ENCODE measurements at regions of chr2 and their contacts with region 1.

Region 1: DNA sequence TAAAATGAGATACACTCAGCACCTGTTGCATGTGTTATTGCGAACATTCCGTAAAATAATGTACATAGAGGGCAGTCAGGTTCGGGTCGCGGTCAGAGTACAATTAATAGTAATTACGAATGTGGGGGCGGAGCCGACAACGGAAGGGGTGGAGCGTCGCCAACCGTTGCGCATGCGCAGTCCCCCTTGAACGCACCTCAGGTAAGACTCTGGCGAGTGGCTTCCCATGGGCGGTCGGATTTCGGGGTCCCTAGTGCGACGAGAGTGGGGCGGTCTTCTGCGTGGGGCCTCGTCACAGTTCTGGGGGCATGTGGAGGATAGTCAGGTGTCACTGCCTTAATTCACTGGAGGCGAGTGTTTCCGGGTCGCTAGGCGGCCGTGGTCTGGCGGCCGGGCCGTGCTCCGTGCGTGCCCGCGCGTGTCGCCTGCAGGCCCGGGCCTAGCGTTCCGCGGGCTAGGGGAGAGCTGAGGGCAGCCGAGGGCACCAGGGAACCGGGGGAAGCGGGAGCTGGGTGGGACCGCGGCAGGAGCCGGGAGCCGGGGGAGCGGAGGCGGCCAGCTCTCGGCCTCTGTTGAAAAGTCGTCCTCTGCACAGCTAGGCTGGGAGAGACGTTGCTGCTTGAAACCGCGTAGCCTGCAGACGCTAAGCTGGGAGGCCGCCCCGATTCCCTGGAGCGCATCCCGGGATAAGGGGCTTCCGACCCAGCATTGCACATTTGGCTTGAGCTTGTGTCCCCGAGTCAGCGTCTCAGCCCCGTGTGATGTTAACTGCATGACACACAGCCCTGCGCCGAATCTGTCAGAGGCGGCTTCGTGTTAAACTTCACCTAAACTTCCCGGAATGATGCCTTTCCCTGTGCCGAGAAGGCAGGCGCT is at the start of gene CEBPZOS:
- DNase-seq: peak; percentile 65 to 85 (median 81)
- H3K4me3 ChIP-seq: peak within 1 kb of the TSS; percentile 65 to 98 (median 89)
- H3K27ac ChIP-seq: peak within 1 kb of the TSS in 58 of 59 donors; percentile 27 to 96 (median 84)
- H3K27me3 ChIP-seq: no peaks in the 10 kb centered on the region
- CTCF ChIP-seq: peak in 16 of 56 donors; percentile 7 to 34 (median 22)
- total RNA-seq, gene CEBPZOS: 31.6 to 64.9 (median 49.0) TPM

Region 2: GRCh38 chr2:37156857-37157714 is 39.5 kb before region 1 on chr2 and contains the start of gene EIF2AK2:
- intact Hi-C with region 1: loop called (anchors 5 kb)
- DNase-seq: peak; percentile 50 to 84 (median 70)
- H3K4me3 ChIP-seq: peak within 1 kb of the TSS; percentile 51 to 97 (median 85)
- H3K27ac ChIP-seq: peak within 1 kb of the TSS; percentile 19 to 96 (median 82)
- H3K27me3 ChIP-seq: no peaks in the 10 kb centered on the region
- CTCF ChIP-seq: peak in 7 of 56 donors; percentile 7 to 29 (median 16)
- total RNA-seq, gene EIF2AK2: 30.7 to 122 (median 49.8) TPM

Region 3: DNA sequence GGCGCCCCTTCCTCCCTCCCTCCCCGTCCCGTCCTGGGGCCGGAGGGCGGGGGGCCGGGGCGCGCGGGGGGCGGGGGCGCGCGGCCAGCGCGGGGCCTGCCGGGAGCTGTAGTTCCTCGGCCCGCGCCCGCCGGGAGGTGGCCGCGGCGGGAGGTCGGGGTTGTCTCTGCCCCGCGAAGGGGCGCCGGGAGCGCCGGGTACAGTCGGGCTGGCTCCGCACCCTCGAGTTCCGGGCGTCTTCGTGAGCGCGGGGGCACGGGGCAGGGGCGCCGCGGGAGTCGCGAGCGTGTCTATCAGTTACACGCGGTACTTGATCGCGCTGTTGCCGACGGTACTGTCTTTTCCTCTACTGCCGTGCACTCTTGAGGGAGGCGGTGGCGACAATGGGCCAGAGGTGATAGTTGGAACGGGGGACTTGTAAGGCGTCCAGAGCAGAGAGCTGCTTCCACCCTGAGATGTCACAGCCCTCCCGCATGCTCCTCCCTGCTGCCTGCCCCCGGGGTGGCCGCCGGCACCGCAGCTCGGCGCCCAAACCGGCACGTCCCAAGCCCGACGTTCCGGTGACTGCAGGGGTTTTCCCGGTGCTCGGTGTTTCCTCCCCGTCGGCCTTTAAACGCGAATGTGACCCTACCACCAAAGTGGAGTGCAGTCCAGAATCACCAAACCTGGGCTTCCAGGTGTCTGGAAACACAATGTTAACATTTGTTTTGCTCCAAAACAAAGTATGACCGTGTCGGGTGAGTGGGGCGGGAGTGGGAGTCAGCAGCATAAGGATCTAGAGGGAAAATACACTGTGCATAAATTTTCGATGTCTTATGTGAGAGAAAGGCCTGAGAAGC is 128.4 kb after region 1 on chr2 and contains the start of gene PRKD3:
- intact Hi-C with region 1: loop called in 1 of 2 experiments (anchors 10 kb)
- DNase-seq: peak in 3 of 10 donors; percentile 12 to 75 (median 40)
- H3K4me3 ChIP-seq: peak within 1 kb of the TSS; percentile 55 to 88 (median 74)
- H3K27ac ChIP-seq: peak within 1 kb of the TSS in 55 of 59 donors; percentile 11 to 91 (median 77)
- H3K27me3 ChIP-seq: peaks cover 0 to 28% (median 0%) of the 10 kb centered on the region in 45 donors
- CTCF ChIP-seq: peak in 5 of 56 donors; percentile 2 to 25 (median 21)
- total RNA-seq, gene PRKD3: 7.8 to 37.9 (median 16.4) TPM

Region 4: DNA sequence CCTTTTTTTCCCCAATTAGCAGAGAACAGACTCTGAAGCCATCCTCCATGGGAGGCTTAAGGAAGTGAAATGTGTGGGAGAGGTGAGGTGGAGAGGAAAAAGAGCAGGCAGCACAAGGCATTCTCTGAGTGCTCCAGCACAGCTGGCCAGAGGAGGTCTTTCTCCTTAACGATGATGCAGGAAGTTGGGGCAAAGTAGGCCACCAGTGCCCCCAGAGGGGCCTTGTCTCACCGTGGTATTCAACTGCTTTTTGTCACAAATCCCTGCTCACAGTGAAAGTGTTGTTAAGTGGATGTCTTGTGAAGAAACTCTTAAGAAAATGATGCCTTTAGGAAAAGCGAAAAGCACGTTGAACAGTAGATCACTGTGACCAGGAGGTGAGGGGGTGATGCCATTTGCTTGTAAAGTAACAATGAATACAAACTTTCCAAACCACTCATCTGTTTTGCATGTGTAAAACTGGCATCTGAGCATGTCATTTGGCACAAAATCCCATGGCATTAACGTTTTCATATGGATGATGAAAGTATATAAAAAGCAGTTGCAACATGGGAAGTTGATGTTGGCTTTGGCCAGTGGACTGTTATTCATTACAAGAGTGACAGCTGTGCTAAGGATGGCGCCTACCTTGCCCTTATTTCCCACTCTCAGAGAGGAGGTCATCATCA is 524.1 kb after region 1 on chr2:
- intact Hi-C with region 1: no loop called
- DNase-seq: no peak
- H3K4me3 ChIP-seq: no peak overlapping the region
- H3K27ac ChIP-seq: peak overlapping the region in 8 of 59 donors; percentile 1 to 47 (median 20)
- H3K27me3 ChIP-seq: no peaks in the 10 kb centered on the region
- CTCF ChIP-seq: no peak

Measured in dorsolateral prefrontal cortex (tissue), 120 donors.